Caco-2 (cell line): ENCODE measurements at regions of chr2 and their contacts with region 1.

Region 1: DNA sequence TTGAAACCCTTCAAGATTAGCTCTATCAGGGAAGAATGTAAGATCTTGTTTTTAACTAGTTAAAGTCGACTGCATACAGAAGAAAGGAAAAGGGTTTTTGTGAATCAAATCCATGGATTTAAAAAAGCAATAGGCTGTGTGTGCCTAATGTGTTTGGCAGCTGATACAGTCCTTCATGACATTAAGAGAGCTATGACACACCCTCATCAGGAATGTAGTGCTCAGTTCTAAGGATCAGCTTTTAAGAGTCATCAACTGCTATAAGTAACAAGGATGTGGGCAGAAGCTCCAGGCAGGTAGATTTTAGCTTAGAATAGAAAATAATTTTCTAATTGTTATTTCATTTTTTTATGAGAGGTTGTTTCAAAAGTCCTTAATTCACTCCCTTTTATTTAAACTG is 52.9 kb downstream of the PPP1R1C start:
- DNase-seq: no peak
- H3K4me3 ChIP-seq: no peak overlapping the region
- H3K4me3 Mint-ChIP-seq: no peak overlapping the region
- H3K27ac Mint-ChIP-seq: no peak overlapping the region
- H3K4me1 ChIP-seq: no peaks in the 10 kb centered on the region
- H3K4me1 Mint-ChIP-seq: no peaks in the 10 kb centered on the region
- H3K27me3 ChIP-seq: no peaks in the 10 kb centered on the region
- H3K27me3 Mint-ChIP-seq: peaks cover 3% of the 10 kb centered on the region
- CTCF ChIP-seq: no peak

Region 2: GRCh38 chr2:182020720-182021119 is 17.9 kb before region 1 on chr2:
- CTCF ChIA-PET with region 1: no interaction called
- POLR2A ChIA-PET with region 1: no interaction called
- intact Hi-C with region 1: loop called (anchors 1 kb)
- DNase-seq: no peak
- H3K4me3 ChIP-seq: no peak overlapping the region
- H3K4me3 Mint-ChIP-seq: no peak overlapping the region
- H3K27ac Mint-ChIP-seq: no peak overlapping the region
- H3K4me1 ChIP-seq: no peaks in the 10 kb centered on the region
- H3K4me1 Mint-ChIP-seq: peaks cover 10% of the 10 kb centered on the region
- H3K27me3 ChIP-seq: no peaks in the 10 kb centered on the region
- H3K27me3 Mint-ChIP-seq: no peaks in the 10 kb centered on the region
- CTCF ChIP-seq: no peak